ENCODE measurements at regions of chr14 and their contacts with region 1.

Region 1: DNA sequence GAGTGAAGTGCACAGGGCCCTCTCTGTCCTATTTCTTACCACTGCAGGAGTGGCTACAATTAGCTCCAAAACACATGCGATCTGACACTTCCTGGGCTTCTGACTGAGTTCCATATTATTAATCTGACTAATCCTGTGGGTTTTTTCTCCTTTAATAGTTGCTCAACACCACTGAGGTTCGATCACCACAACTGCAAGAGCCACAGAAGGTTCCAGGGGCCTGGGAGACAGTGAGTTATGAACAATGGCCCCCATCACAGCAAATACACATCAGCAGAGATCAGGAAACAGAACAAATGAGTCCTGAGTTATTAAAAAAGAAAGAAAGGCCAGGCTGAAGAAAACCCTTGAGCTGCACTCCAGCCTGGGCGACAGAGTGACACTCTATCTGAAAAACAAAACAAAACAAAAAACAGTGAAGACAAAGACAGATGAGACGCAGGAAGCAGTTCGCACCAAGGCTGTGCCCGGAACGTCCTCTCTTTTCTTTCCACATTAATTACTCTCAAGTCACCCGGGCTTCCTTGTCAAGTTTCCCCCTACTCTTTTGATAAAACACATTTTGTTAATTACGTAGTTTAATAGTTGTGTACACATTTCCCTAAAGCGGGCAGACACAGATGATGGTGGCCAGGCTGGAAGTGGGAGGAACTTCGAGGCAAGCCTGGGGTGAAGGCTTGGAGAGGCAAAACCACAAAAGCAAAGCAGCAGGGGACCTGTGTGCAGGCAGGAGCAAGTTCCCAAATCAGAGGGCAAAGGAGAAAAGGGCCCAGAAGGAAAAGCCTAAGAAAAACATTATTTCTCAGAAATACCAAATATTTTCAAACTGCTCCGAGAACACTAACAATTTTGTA is 42.7 kb downstream of the CDC42BPB start:
- DNase-seq: peak; percentile 20
- H3K27ac ChIP-seq: peak overlapping the region; percentile 38
- CTCF ChIP-seq: no peak

Region 2: GRCh38 chr14:102998393-102998792 is 16.3 kb before region 1 on chr14:
- CTCF ChIA-PET with region 1: interaction called, 4 read pairs
- POLR2A ChIA-PET with region 1: interaction called, 12 read pairs
- DNase-seq: no peak
- H3K27ac ChIP-seq: no peak overlapping the region
- CTCF ChIP-seq: no peak